ENCODE measurements at regions of chr14 and their contacts with region 1.

Region 1: DNA sequence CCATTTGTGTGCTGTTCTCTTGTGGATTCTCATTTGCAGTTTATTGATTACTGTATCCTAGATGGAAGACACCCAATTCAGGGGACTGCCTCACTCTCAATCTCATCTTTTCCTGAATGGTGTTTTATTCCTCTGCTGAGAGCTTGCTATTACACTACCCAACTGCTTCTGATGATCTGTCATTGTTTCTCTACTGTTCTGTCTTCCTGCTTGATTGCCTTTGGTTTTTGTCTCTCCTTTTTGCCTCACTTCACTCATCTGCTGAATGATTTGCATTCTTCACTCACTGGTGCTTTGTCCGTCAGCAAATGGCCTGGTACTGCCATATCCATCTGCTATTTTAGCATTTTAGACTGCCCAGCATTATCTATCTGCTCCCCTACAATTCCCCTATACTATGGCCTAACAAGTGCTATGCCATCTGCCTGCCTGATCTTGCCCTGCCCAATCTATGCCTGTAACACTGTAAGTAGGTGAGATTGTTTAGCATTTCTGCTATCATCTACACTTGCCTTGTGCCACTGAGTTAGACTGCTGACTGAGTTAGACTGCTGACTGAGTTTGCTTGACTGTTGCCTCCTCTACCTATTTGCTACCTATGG is 335.1 kb downstream of the GPHN start:
- DNase-seq: no peak
- ATAC-seq: no peak
- H3K4me3 ChIP-seq: no peak overlapping the region
- H3K27ac ChIP-seq: no peak overlapping the region
- H3K4me1 ChIP-seq: no peaks in the 10 kb centered on the region
- H3K27me3 ChIP-seq: no peaks in the 10 kb centered on the region
- CTCF ChIP-seq: no peak

Region 2: GRCh38 chr14:66638689-66639088 is 204.3 kb before region 1 on chr14:
- CTCF ChIA-PET with region 1: no interaction called
- POLR2A ChIA-PET with region 1: interaction called, 10 read pairs
- intact Hi-C with region 1: no loop called
- DNase-seq: peak; percentile 61
- ATAC-seq: peak; percentile 54
- H3K4me3 ChIP-seq: no peak overlapping the region
- H3K27ac ChIP-seq: no peak overlapping the region
- H3K4me1 ChIP-seq: peaks cover 18% of the 10 kb centered on the region
- H3K27me3 ChIP-seq: no peaks in the 10 kb centered on the region
- CTCF ChIP-seq: no peak

Region 3: DNA sequence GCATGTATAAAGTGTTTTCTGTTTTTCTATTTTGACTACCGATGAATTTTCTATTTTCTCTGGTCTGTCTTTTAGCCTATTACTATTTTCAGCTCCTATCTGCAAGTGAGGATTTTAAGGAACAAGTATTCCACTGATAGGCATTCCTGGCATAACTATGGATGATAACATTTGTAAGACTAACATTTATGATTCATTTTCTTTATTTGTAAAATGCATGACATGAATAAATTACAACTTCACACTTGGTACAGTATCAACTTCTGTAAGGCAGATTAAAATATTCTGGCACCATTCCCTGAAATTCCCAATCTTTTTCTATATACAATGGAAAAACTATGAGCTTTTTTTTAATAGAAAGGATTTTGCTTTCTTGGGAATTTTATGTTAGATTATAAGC is 225.2 kb after region 1 on chr14:
- CTCF ChIA-PET with region 1: no interaction called
- POLR2A ChIA-PET with region 1: interaction called, 10 read pairs
- intact Hi-C with region 1: no loop called
- DNase-seq: no peak
- ATAC-seq: no peak
- H3K4me3 ChIP-seq: no peak overlapping the region
- H3K27ac ChIP-seq: no peak overlapping the region
- H3K4me1 ChIP-seq: no peaks in the 10 kb centered on the region
- H3K27me3 ChIP-seq: no peaks in the 10 kb centered on the region
- CTCF ChIP-seq: no peak

Region 4: DNA sequence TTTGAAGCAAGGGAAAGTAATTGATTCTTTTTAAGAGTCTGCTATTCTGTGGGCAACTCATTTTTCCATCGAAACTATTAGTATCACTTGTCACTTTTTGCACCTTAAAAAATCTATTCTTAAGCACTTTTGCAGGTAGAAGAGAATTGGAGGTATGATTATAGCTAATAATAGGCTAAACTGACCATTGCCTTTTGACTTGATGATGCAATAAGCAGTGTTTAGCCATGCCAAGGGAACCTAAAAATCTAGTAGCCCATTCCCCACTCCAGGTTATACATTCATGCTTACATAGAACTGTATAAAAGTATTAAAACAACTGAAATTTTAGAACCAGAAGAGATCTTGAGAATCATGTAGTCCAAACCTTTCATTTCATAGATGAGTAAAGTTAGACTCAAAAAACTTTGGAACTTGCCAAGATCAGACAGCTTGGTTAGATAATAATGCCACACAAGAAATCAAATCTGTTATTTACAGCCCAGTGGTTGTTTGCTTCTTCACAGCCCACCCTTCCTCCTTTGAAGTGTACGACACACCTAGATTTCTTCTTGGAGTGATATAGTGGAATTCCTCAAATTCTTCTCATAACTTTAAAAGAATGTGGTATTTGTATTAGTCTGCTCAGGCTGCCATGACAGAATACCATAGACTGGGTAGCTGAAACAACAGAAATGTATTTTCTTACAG is 324.6 kb after region 1 on chr14:
- CTCF ChIA-PET with region 1: no interaction called
- POLR2A ChIA-PET with region 1: no interaction called
- intact Hi-C with region 1: no loop called
- DNase-seq: peak; percentile 72
- ATAC-seq: peak; percentile 87
- H3K4me3 ChIP-seq: no peak overlapping the region
- H3K27ac ChIP-seq: no peak overlapping the region
- H3K4me1 ChIP-seq: peaks cover 13% of the 10 kb centered on the region
- H3K27me3 ChIP-seq: no peaks in the 10 kb centered on the region
- CTCF ChIP-seq: no peak